GM23248 (cell line): ENCODE measurements at regions of chr12 and their contacts with region 1.

Region 1: GRCh38 chr12:96989916-96990315 is 82.9 kb downstream of the NEDD1 start:
- DNase-seq: peak; percentile 11
- H3K4me3 ChIP-seq: no peak overlapping the region
- H3K27ac ChIP-seq: no peak overlapping the region
- H3K4me1 ChIP-seq: no peaks in the 10 kb centered on the region
- H3K27me3 ChIP-seq: peaks cover 47% of the 10 kb centered on the region

Region 2: GRCh38 chr12:98388126-98388525 is 1398.2 kb after region 1 on chr12:
- in situ Hi-C with region 1: loop called (anchors 10 kb)
- DNase-seq: no peak
- H3K4me3 ChIP-seq: no peak overlapping the region
- H3K27ac ChIP-seq: no peak overlapping the region
- H3K4me1 ChIP-seq: no peaks in the 10 kb centered on the region
- H3K27me3 ChIP-seq: peaks cover 37% of the 10 kb centered on the region; the same call in 1 of the 2 replicates